CD4-positive, alpha-beta memory T cell (primary cell): ENCODE measurements at regions of chrX and their contacts with region 1.

Region 1: GRCh38 chrX:79081895-79082512 is 62.5 kb upstream of the GPR174 start:
- DNase-seq: peak; percentile 43 to 72 (median 65)
- H3K4me3 ChIP-seq: peak overlapping the region; percentile 6 to 32
- H3K4me3 Mint-ChIP-seq: peak overlapping the region; percentile 51 to 82 (median 78)
- H3K27ac ChIP-seq: peak overlapping the region; percentile 31
- H3K27ac Mint-ChIP-seq: peak overlapping the region; percentile 77 to 94 (median 90)
- H3K4me1 ChIP-seq: peaks cover 40% of the 10 kb centered on the region
- H3K4me1 Mint-ChIP-seq: peaks cover 16 to 37% (median 25%) of the 10 kb centered on the region in 4 donors
- H3K27me3 ChIP-seq: no peaks in the 10 kb centered on the region
- H3K27me3 Mint-ChIP-seq: no peaks in the 10 kb centered on the region

Region 2: DNA sequence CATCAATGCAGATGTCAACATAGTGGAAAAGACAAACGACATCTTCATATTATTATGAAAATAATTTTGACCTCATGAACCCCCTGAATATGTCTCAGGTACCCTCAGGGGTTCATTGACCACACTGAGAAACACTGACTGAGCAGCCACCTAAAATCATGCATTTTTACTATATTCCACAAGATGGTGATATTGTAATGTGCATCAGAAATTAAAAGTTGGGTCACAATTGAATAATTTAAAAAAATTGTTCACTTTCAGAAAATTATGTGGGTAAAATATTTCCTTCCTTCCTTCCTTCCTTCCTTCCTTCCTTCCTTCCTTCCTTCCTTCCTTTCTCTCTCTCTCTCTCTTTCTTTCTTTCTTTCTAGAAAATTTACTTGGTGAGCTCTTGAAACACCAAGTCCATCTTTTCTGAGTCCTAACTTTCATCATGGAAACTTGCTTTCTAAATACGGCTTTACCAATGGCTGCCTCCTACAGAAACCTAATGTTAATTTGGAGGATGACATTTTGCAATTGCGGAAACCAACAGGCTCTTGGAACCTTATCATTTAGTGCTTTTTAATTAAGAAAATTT is 526.5 kb before region 1 on chrX:
- CTCF ChIA-PET with region 1: interaction called, 11 read pairs
- POLR2A ChIA-PET with region 1: interaction called, 3 read pairs
- intact Hi-C with region 1: loop called (anchors 1 kb)
- DNase-seq: peak in 4 of 5 donors; percentile 31 to 39 (median 33)
- H3K4me3 ChIP-seq: no peak overlapping the region
- H3K4me3 Mint-ChIP-seq: peak overlapping the region in 2 of 8 donors; percentile 24 to 34
- H3K27ac ChIP-seq: no peak overlapping the region
- H3K27ac Mint-ChIP-seq: peak overlapping the region in 5 of 7 donors; percentile 36 to 90 (median 75)
- H3K4me1 ChIP-seq: peaks cover 6% of the 10 kb centered on the region
- H3K4me1 Mint-ChIP-seq: peaks cover 0 to 1% (median 0%) of the 10 kb centered on the region in 4 donors
- H3K27me3 ChIP-seq: no peaks in the 10 kb centered on the region
- H3K27me3 Mint-ChIP-seq: no peaks in the 10 kb centered on the region

Region 3: DNA sequence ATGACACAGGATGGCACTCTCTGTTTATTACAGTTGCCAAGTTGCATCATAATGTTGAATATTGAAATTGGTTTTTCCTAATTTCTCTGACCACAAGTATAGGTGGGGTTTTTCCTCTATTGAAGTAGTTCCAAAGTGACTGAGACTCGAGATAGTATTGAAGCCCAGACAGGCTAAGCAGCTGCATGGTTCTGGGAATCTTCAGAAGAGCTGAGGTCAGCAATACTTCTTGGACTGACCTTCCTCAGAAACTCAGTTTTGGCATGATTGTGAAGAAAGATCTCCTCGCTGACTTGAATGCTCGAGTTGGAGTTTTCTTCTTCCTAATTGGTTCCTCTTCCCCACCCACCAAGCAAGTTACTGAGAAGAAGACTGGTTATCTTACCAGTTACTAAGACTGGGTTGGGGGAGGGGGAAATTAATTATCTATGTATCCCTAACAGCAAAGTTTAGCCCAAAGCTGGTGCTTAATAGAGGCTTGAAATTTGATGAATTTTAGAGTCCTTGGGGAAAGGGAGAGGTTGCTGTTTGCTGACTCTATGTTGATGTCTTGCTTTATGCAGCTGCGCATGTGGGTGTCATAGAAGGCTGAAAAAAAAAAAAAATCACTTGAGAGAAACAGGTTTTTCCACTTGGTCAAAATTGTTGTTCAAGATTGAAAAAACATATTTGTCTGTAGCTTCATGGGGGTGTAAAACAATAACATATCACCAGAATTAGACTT is 45.7 kb before region 1 on chrX:
- CTCF ChIA-PET with region 1: interaction called, 5 read pairs
- POLR2A ChIA-PET with region 1: no interaction called
- intact Hi-C with region 1: loop called (anchors 2 kb)
- DNase-seq: no peak
- H3K4me3 ChIP-seq: no peak overlapping the region
- H3K4me3 Mint-ChIP-seq: peak overlapping the region in 4 of 8 donors; percentile 13 to 67 (median 36)
- H3K27ac ChIP-seq: no peak overlapping the region
- H3K27ac Mint-ChIP-seq: peak overlapping the region in 2 of 7 donors; percentile 37 to 63
- H3K4me1 ChIP-seq: peaks cover 24% of the 10 kb centered on the region
- H3K4me1 Mint-ChIP-seq: peaks cover 15 to 52% (median 25%) of the 10 kb centered on the region in 4 donors
- H3K27me3 ChIP-seq: no peaks in the 10 kb centered on the region
- H3K27me3 Mint-ChIP-seq: no peaks in the 10 kb centered on the region

Region 4: DNA sequence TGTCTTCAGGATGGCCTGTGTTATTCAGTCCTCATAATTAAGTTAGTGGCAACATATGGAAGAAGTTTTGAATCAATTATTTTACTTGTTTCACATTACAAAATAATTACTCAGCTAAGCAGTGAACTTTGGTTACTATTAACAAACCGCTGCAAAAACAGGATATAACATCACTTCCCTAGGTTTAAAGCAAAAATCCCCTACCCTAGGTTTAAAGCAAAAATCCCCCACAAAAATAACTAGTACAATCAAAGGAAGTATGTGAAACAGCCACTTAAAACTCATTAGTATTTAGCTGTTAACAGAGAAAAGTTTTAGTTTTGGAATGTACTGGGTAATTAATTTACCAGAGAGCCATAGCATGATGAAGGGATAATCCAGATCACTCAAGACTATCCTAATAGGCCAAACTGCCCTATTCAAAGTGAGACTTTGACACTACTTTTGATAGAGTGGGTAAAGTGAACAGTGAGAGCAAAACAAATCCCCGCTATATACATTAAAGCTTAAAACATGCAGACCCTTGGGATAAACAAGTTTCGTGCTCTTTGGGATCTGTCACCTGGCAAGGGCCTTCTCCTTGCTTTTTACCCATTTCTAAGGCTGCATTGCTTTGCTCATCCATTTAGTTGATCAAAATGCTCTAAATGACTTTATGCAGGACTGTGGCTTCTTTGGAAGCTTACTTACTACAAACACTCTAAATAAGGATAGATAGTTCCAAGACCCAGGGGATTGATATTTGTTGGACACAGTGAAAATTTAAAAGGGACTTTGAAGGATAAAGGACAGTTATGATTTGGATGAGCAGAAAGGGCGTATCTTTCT is 26.1 kb after region 1 on chrX:
- CTCF ChIA-PET with region 1: interaction called, 4 read pairs
- POLR2A ChIA-PET with region 1: interaction called, 22 read pairs
- intact Hi-C with region 1: loop called (anchors 2 kb)
- DNase-seq: peak in 4 of 5 donors; percentile 71 to 81 (median 75)
- H3K4me3 ChIP-seq: peak overlapping the region in 1 of 2 donors; percentile 28
- H3K4me3 Mint-ChIP-seq: peak overlapping the region; percentile 54 to 82 (median 74)
- H3K27ac ChIP-seq: peak overlapping the region; percentile 95
- H3K27ac Mint-ChIP-seq: peak overlapping the region; percentile 96 to 99 (median 97)
- H3K4me1 ChIP-seq: peaks cover 68% of the 10 kb centered on the region
- H3K4me1 Mint-ChIP-seq: peaks cover 27 to 70% (median 47%) of the 10 kb centered on the region in 4 donors
- H3K27me3 ChIP-seq: no peaks in the 10 kb centered on the region
- H3K27me3 Mint-ChIP-seq: no peaks in the 10 kb centered on the region

Region 5: DNA sequence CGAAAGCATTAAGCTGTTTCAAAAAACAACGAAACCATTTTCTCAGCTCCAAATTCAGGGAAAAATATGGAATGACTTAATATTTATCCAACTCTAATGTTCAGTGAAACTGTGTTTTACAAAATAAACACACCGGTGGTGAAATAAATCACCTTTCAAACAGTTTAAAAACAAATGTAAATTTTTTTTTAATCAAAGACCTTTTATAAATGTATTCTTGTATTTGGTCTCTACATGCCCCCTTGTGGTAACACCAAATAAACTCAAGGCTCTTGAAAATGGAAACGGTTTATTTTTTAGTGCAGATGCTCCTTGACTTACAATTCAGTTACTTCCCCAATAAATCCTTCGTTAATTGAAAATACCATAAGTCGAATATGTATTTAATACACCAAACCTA is 331.0 kb after region 1 on chrX:
- CTCF ChIA-PET with region 1: interaction called, 7 read pairs
- POLR2A ChIA-PET with region 1: interaction called, 3 read pairs
- intact Hi-C with region 1: loop called (anchors 1 kb)
- DNase-seq: peak in 4 of 5 donors; percentile 48 to 54 (median 50)
- H3K4me3 ChIP-seq: peak overlapping the region; percentile 23 to 34
- H3K4me3 Mint-ChIP-seq: peak overlapping the region; percentile 71 to 84 (median 82)
- H3K27ac ChIP-seq: peak overlapping the region; percentile 56
- H3K27ac Mint-ChIP-seq: peak overlapping the region; percentile 41 to 88 (median 82)
- H3K4me1 ChIP-seq: peaks cover 7% of the 10 kb centered on the region
- H3K4me1 Mint-ChIP-seq: peaks cover 18 to 35% (median 22%) of the 10 kb centered on the region in 4 donors
- H3K27me3 ChIP-seq: no peaks in the 10 kb centered on the region
- H3K27me3 Mint-ChIP-seq: no peaks in the 10 kb centered on the region